Dorsolateral prefrontal cortex (tissue), 120 donors: ENCODE measurements at regions of chr16 and their contacts with region 1.

Region 1: DNA sequence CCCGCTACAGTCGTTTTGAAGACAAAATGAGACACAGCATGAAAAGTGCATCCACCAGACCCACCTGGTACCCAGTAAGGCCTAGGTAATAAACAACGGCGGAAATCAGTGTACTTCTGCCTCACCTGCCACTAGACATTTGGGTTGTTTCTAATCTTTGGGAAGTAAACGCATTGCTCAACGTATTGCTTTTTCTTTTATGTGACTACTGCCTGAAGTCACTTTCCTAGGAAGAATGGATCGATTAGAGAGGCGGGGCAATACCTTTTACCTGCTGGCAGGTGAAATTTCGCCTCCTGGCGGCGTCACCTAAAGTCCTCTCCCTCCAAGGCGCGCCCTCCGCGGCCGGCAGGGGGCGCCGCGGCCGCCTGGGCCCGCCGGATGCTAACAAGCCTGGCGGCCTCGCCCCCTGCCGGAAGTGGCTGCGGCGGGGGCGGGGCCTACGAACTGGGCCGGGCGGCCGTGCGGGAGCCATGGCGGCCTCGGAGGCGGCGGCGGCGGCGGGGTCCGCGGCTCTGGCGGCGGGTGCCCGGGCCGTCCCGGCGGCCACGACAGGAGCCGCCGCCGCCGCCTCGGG is at the start of gene ATMIN:
- DNase-seq: peak; percentile 59 to 88 (median 72)
- H3K4me3 ChIP-seq: peak within 1 kb of the TSS; percentile 61 to 97 (median 80)
- H3K27ac ChIP-seq: peak within 1 kb of the TSS in 52 of 59 donors; percentile 15 to 88 (median 72)
- H3K27me3 ChIP-seq: no peaks in the 10 kb centered on the region
- CTCF ChIP-seq: peak; percentile 66 to 99 (median 94)
- total RNA-seq, gene ATMIN: 38.2 to 76.8 (median 57.2) TPM

Region 2: GRCh38 chr16:80948886-80949493 is 86.5 kb before region 1 on chr16:
- intact Hi-C with region 1: loop called in 1 of 2 experiments (anchors 5 kb)
- DNase-seq: peak in 7 of 10 donors; percentile 31 to 71 (median 68)
- H3K4me3 ChIP-seq: peak overlapping the region in 15 of 59 donors; percentile 0 to 53 (median 24)
- H3K27ac ChIP-seq: peak overlapping the region in 3 of 59 donors; percentile 36 to 72 (median 63)
- H3K27me3 ChIP-seq: peaks cover 0 to 11% (median 0%) of the 10 kb centered on the region in 45 donors
- CTCF ChIP-seq: peak; percentile 28 to 84 (median 67)

Region 3: GRCh38 chr16:81077076-81077940 is 41.8 kb after region 1 on chr16 and contains the start of gene C16orf46:
- intact Hi-C with region 1: loop called (anchors 2 to 5 kb)
- DNase-seq: peak; percentile 98 to 100 (median 99)
- H3K4me3 ChIP-seq: peak within 1 kb of the TSS; percentile 54 to 100 (median 85)
- H3K27ac ChIP-seq: peak within 1 kb of the TSS; percentile 65 to 99 (median 95)
- H3K27me3 ChIP-seq: no peaks in the 10 kb centered on the region
- CTCF ChIP-seq: peak in 26 of 56 donors; percentile 6 to 54 (median 21)
- total RNA-seq, gene C16orf46: 0.69 to 11.8 (median 6.2) TPM

Region 4: DNA sequence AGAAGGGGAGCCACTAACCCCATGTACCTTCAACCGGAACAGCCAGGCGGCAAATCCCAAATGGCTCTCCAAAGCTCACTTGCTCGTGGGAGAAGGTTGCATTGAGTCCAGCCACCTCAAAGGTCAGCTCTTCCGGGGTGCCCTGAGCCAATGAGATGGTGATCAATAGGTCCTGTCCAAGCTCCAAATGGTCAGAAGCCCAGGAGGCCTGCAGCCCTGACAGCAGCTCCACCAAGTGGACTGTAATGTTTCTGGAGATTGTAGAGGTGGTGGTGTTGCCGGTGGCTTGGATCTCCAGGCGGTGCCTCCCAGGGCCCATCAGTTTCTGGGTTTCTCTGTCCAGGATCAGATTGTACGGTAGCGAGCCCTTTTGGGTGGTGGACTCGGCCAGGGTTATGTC is 163.1 kb after region 1 on chr16:
- intact Hi-C with region 1: loop called (anchors 2 to 5 kb)
- DNase-seq: peak in 4 of 10 donors; percentile 28 to 54 (median 39)
- H3K4me3 ChIP-seq: peak overlapping the region in 17 of 59 donors; percentile 2 to 53 (median 29)
- H3K27ac ChIP-seq: peak overlapping the region in 12 of 59 donors; percentile 3 to 64 (median 30)
- H3K27me3 ChIP-seq: peaks cover 0 to 3% (median 0%) of the 10 kb centered on the region in 45 donors
- CTCF ChIP-seq: peak in 44 of 56 donors; percentile 11 to 65 (median 39)

Region 5: DNA sequence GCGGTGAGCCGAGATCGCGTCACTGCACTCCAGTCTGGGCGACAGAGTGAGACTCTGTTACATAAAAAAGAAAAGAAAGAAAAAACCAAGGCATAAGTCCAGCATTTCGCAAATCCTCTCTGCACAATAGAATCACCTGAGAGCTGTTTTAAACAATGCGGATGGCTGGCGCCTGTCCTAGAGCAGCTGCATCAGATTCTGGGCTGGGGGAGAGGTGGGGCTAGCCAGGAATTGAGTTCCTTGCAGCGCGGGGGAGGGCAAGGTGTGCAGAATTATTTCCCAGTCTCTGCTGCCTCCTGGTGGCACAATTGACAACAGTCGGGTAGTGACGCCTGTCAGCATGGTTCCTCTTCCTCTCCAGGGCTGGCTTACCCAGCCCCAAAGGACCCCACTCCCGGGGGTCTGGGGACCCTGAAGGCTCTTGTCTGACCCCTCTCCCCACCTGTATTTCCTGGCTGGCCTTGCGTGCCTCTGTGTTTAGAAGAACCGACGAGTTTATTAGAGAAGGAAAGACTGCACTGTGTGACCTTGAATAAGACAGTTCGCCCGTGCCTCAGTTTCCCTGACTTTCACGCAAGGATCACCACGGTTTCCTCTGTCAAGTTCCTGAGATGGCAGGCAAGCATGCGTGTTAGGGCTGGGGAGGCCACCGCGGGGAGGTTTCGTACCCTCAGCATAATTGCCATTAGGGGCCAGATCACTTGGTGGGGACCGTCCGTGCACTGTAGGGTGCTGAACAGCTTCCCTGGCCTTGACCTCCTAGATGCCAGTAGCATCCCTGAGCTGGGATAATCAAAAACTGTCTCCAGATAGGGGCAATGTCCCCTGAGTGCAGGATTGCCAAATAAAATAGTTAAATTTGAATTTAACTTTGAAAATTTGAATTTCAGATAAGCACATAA is 702.6 kb after region 1 on chr16:
- intact Hi-C with region 1: loop called in 1 of 2 experiments (anchors 10 kb)
- DNase-seq: peak; percentile 52 to 87 (median 78)
- H3K4me3 ChIP-seq: peak overlapping the region in 54 of 59 donors; percentile 13 to 68 (median 42)
- H3K27ac ChIP-seq: peak overlapping the region in 22 of 59 donors; percentile 5 to 79 (median 43)
- H3K27me3 ChIP-seq: no peaks in the 10 kb centered on the region
- CTCF ChIP-seq: peak; percentile 57 to 95 (median 86)